ENCODE measurements at regions of chr20 and their contacts with region 1.

Region 1: DNA sequence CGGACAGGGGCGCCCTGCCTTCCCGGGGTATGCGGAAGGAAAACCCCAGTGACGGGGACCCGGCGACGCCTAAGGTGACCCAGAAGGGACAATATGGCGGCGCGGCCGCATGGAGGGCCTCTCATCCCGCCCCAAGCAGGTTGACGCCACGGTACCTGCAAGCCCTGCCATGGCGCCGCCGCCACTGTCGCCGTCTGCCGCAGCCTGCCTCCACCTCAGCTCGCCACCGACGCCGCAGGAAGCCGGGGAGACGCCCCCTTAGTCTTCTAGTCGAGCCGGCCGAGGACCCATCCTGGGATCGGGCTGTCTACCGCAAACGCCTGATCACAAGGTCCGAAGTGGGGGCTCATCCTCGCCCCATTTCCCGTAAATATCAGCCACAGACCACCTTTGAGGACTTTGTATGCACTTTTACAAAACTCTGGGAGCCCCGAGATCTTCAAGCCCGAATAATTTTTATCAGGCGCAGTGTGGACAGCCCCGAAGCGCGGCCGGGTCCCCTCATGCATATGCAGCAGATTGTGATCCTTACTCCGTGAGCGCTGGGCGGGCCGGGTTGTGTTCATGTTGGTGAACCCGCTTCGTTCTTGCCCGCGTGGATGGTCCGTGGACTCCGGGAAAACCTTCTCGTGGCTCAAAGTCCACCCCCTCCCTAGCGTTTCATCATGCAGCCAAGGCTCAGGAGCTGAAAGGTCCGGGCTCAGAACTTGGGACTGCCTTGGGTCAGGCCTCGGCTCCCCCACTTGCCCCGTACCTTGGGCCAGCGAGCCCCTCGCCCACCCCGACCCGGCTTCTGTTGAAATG is at the start of gene BLCAP:
- DNase-seq: peak; percentile 94

Region 2: DNA sequence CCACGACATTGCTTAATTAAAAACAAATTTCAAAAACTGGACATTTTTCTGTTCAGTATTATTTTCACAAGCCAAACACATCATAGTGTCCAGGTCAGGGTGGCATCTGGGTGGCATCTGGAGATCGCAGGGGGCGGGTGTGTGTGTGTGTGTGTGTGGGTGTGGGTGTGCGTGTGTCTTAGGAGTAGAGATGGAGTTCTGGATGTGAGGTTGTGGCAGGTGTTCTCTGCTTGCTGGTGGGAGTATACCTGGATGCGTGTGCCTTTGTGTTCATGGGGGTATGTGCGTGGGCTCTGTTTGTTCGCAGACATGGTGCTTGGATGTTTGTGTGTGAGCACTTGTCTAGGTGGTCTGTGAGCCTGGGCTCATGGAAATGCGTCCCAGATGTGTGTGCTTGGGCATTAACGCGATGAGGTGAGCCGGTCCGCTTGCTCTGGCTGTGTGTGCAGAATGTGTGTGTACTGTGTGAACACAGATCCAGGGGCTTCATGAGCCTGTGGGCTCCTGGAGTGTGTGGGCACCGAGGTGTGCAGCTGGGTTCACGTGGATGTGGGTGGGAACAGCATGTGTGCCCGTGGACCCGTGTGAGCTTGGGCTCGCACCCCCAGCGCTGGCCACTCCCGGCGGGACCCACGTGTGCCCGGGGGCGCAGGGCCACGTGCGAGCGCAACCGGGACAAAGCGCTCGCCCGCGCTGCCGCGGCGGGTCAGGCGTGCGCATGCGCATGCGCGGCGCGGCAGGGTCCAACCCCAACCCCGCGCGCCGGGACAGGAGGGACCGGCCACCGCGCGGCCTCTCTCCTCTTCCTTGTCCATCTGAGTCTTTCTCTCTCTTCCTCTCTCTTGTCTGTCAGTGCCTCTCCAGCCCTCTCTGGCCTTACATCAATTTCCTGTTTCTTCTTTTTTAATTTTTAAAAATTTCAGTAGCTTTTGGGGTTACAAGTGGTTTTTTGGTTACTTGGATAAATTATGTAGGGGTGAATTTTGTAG is 121.5 kb before region 1 on chr20:
- in situ Hi-C with region 1: loop called (anchors 10 kb)
- DNase-seq: peak; percentile 58

Measured in KBM-7 (cell line).